ENCODE measurements at regions of chr17 and their contacts with region 1.

Region 1: GRCh38 chr17:49997791-49998703 is 3.0 kb upstream of the DLX3 start:
- DNase-seq: peak; percentile 85
- H3K4me3 ChIP-seq: no peak overlapping the region
- H3K27ac ChIP-seq: no peak overlapping the region
- H3K4me1 ChIP-seq: peaks cover 17% of the 10 kb centered on the region
- H3K27me3 ChIP-seq: no peaks in the 10 kb centered on the region
- CTCF ChIP-seq: peak; percentile 88 to 96 (median 92)
- POLR2A ChIP-seq: no peak

Region 2: GRCh38 chr17:49861150-49861892 is 136.7 kb before region 1 on chr17:
- intact Hi-C with region 1: loop called (anchors 5 kb)
- DNase-seq: peak; percentile 56
- H3K4me3 ChIP-seq: no peak overlapping the region
- H3K27ac ChIP-seq: no peak overlapping the region
- H3K4me1 ChIP-seq: no peaks in the 10 kb centered on the region
- H3K27me3 ChIP-seq: no peaks in the 10 kb centered on the region
- CTCF ChIP-seq: peak; percentile 73 to 86 (median 75)
- POLR2A ChIP-seq: no peak

Region 3: DNA sequence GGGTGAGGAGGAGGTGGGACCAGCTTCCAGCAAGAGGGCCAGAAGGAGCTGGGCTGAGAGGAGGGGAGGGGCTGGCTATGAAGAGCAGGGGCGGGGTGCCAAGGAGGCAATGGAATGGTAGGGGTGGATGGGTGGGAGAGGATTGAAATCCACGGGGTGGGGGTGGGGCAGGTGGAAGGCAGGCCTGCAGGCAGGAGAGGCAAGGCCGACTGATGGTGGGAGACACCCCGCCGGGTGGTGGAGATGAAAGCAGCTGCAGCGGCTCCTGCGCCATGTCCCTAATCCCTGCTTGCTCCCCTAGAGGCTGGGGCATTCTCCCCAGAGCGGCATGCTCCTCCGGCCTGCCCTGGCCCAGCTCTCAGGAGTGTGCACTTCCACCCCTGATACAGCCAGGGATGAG is 122.4 kb before region 1 on chr17:
- intact Hi-C with region 1: loop called (anchors 5 kb)
- DNase-seq: no peak
- H3K4me3 ChIP-seq: no peak overlapping the region
- H3K27ac ChIP-seq: no peak overlapping the region
- H3K4me1 ChIP-seq: no peaks in the 10 kb centered on the region
- H3K27me3 ChIP-seq: no peaks in the 10 kb centered on the region
- CTCF ChIP-seq: no peak
- POLR2A ChIP-seq: no peak

Region 4: GRCh38 chr17:49928837-49929475 is 69.1 kb before region 1 on chr17:
- intact Hi-C with region 1: no loop called
- DNase-seq: no peak
- H3K4me3 ChIP-seq: no peak overlapping the region
- H3K27ac ChIP-seq: no peak overlapping the region
- H3K4me1 ChIP-seq: no peaks in the 10 kb centered on the region
- H3K27me3 ChIP-seq: no peaks in the 10 kb centered on the region
- CTCF ChIP-seq: no peak
- POLR2A ChIP-seq: no peak

Region 5: DNA sequence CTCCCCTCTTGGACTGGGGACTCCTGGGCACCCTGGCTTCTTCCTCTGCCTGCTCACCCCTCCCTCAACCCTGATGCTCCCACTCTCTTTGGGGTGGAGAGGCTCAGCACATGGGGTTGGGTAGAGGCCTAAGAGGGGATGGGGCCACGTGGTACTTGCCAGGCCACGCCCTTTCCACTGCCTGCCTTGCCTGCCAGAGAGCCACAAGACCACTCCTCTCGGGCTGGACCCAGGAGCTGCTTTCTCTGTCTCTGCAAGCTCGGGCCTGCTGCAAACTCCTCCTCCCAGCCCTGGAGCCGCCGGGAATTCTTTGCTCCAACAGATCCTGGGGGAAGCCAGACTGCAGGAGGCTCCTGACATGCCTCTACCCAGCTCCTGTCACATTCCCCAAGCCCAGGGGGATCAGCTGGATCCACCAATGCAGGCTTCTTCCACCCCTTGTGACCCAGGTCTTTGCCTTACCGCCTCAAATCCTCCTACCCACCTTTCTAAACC is 17.3 kb before region 1 on chr17:
- intact Hi-C with region 1: no loop called
- DNase-seq: no peak
- H3K4me3 ChIP-seq: no peak overlapping the region
- H3K27ac ChIP-seq: no peak overlapping the region
- H3K4me1 ChIP-seq: no peaks in the 10 kb centered on the region
- H3K27me3 ChIP-seq: no peaks in the 10 kb centered on the region
- CTCF ChIP-seq: no peak
- POLR2A ChIP-seq: no peak

Region 6: DNA sequence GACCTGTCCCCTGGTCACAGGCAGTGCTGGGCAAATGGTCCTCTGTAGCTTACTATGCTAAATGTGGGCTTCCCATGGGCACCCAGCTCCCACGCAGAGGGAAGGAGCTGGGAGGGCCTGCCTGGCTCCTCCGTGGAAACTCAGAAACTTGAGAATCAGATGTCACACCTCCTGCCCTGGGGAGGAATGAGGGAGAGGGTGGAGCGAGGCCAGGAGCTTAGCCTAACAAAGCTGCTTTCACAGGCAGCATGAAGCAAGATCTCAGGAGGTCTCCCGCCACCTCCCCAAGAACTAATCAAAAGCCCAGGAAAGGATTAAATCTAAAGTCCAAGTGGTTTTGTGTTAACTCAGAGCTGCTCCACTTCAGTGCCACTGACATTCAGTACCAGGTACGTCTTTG is 314.3 kb after region 1 on chr17:
- intact Hi-C with region 1: no loop called
- DNase-seq: no peak
- H3K4me3 ChIP-seq: no peak overlapping the region
- H3K27ac ChIP-seq: no peak overlapping the region
- H3K4me1 ChIP-seq: peaks cover 7% of the 10 kb centered on the region
- H3K27me3 ChIP-seq: no peaks in the 10 kb centered on the region
- CTCF ChIP-seq: no peak
- POLR2A ChIP-seq: no peak